Natural killer cell (primary cell): ENCODE measurements at regions of chr5 and their contacts with region 1.

Region 1: GRCh38 chr5:32585446-32586275 is at the start of gene SUB1:
- DNase-seq: peak; percentile 95 to 97
- ATAC-seq: peak; percentile 85 to 93 (median 87)
- H3K4me3 ChIP-seq: peak within 1 kb of the TSS; percentile 94
- H3K4me3 Mint-ChIP-seq: peak within 1 kb of the TSS; percentile 98
- H3K27ac ChIP-seq: peak within 1 kb of the TSS; percentile 99
- H3K27ac Mint-ChIP-seq: peak within 1 kb of the TSS; percentile 93 to 95
- H3K4me1 ChIP-seq: peaks cover 32% of the 10 kb centered on the region
- H3K4me1 Mint-ChIP-seq: peaks cover 60% of the 10 kb centered on the region in 2 donors
- H3K27me3 ChIP-seq: no peaks in the 10 kb centered on the region
- H3K27me3 Mint-ChIP-seq: no peaks in the 10 kb centered on the region
- CTCF ChIP-seq: no peak
- total RNA-seq, gene SUB1: 330 to 352 (median 338) TPM

Region 2: GRCh38 chr5:32174011-32174870 is 411.4 kb before region 1 on chr5 and contains the start of gene GOLPH3:
- intact Hi-C with region 1: loop called (anchors 2 kb)
- DNase-seq: peak; percentile 92
- ATAC-seq: peak; percentile 85 to 94 (median 87)
- H3K4me3 ChIP-seq: peak within 1 kb of the TSS; percentile 82
- H3K4me3 Mint-ChIP-seq: peak within 1 kb of the TSS; percentile 98
- H3K27ac ChIP-seq: peak within 1 kb of the TSS; percentile 93
- H3K27ac Mint-ChIP-seq: peak within 1 kb of the TSS; percentile 98
- H3K4me1 ChIP-seq: peaks cover 18% of the 10 kb centered on the region
- H3K4me1 Mint-ChIP-seq: peaks cover 32 to 34% of the 10 kb centered on the region in 2 donors
- H3K27me3 ChIP-seq: no peaks in the 10 kb centered on the region
- H3K27me3 Mint-ChIP-seq: peaks cover 0 to 9% of the 10 kb centered on the region in 2 donors
- CTCF ChIP-seq: no peak
- total RNA-seq, gene GOLPH3: 67.6 to 70.6 (median 69.3) TPM

Region 3: GRCh38 chr5:32241034-32241783 is 344.5 kb before region 1 on chr5:
- intact Hi-C with region 1: loop called (anchors 5 kb)
- DNase-seq: peak; percentile 41 to 69
- ATAC-seq: peak; percentile 89 to 93 (median 92)
- H3K4me3 ChIP-seq: no peak overlapping the region
- H3K4me3 Mint-ChIP-seq: peak overlapping the region; percentile 90
- H3K27ac ChIP-seq: peak overlapping the region; percentile 92
- H3K27ac Mint-ChIP-seq: peak overlapping the region; percentile 97 to 98
- H3K4me1 ChIP-seq: peaks cover 40% of the 10 kb centered on the region
- H3K4me1 Mint-ChIP-seq: peaks cover 54 to 55% of the 10 kb centered on the region in 2 donors
- H3K27me3 ChIP-seq: no peaks in the 10 kb centered on the region
- H3K27me3 Mint-ChIP-seq: no peaks in the 10 kb centered on the region
- CTCF ChIP-seq: no peak

Region 4: DNA sequence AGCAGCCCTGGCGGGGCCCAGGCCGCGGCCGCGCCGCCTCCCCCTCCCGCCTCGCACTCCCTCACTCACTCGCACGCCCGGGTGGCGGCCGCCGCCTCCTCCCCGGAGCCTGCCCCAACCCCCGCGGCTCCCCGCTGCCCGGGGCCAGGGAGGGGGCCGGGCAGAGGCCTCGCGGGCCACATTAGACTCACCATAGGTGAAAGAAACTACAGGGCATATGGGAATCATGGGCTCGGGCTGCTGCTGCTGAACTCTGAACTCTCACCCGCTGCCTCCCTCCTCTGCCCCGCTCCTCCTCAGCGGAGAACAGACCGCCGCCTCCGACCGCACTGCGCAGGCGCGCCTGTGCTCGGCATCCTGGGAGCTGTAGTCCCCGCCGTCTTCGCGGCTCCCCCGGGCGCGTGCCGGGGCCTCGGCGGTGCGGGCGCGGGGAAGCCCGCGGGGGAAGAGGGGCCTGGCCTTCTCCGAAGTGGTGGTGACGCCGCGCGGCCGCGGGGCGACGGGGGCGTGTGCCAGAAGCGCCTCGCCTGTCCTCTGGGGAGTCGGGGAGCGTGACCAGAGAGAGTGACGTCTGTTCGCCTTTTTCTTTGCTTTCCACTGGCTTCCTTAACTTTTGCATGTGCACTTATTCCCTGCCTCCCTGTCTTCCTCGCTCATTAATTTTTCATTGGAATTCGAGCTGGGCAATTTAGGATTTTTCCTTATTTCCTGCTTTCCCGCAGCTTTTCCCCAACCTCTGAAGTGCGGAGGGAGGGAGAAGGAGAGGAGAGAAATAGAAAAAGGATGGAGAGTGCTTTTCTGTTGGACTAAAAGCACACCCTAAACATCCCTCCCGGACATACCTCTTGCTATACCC is 141.0 kb before region 1 on chr5 and contains the start of gene ZFR:
- intact Hi-C with region 1: loop called (anchors 2 kb)
- DNase-seq: peak; percentile 86 to 97
- ATAC-seq: peak; percentile 87 to 95 (median 90)
- H3K4me3 ChIP-seq: peak within 1 kb of the TSS; percentile 98
- H3K4me3 Mint-ChIP-seq: peak within 1 kb of the TSS; percentile 91
- H3K27ac ChIP-seq: peak within 1 kb of the TSS; percentile 96
- H3K27ac Mint-ChIP-seq: peak within 1 kb of the TSS; percentile 90 to 91
- H3K4me1 ChIP-seq: peaks cover 17% of the 10 kb centered on the region
- H3K4me1 Mint-ChIP-seq: peaks cover 27 to 28% of the 10 kb centered on the region in 2 donors
- H3K27me3 ChIP-seq: no peaks in the 10 kb centered on the region
- H3K27me3 Mint-ChIP-seq: peaks cover 0 to 3% of the 10 kb centered on the region in 2 donors
- CTCF ChIP-seq: no peak
- total RNA-seq, gene ZFR: 62.7 to 70.8 (median 62.7) TPM

Region 5: DNA sequence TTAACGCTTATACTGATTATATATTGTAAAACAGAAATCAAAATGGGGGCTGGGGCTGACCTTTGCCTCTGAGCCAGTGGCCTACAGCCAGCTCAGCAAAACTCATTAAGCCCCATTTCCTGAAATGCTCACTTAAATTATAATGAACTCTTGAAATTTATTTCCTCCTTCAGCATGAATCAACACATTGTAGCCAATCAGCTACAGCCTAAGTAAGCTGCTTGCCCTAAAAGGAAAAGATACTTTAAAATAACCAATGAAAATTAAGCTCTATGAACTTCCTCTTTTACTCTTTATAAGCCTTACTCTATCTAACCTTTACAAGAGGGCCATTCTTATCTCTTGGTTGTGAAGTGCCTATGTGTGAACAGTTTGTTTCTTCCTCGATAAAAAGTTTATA is 33.8 kb before region 1 on chr5:
- intact Hi-C with region 1: no loop called
- DNase-seq: no peak
- ATAC-seq: no peak
- H3K4me3 ChIP-seq: no peak overlapping the region
- H3K4me3 Mint-ChIP-seq: no peak overlapping the region
- H3K27ac ChIP-seq: no peak overlapping the region
- H3K27ac Mint-ChIP-seq: no peak overlapping the region
- H3K4me1 ChIP-seq: no peaks in the 10 kb centered on the region
- H3K4me1 Mint-ChIP-seq: no peaks in the 10 kb centered on the region
- H3K27me3 ChIP-seq: no peaks in the 10 kb centered on the region
- H3K27me3 Mint-ChIP-seq: peaks cover 0 to 4% of the 10 kb centered on the region in 2 donors
- CTCF ChIP-seq: no peak

Region 6: DNA sequence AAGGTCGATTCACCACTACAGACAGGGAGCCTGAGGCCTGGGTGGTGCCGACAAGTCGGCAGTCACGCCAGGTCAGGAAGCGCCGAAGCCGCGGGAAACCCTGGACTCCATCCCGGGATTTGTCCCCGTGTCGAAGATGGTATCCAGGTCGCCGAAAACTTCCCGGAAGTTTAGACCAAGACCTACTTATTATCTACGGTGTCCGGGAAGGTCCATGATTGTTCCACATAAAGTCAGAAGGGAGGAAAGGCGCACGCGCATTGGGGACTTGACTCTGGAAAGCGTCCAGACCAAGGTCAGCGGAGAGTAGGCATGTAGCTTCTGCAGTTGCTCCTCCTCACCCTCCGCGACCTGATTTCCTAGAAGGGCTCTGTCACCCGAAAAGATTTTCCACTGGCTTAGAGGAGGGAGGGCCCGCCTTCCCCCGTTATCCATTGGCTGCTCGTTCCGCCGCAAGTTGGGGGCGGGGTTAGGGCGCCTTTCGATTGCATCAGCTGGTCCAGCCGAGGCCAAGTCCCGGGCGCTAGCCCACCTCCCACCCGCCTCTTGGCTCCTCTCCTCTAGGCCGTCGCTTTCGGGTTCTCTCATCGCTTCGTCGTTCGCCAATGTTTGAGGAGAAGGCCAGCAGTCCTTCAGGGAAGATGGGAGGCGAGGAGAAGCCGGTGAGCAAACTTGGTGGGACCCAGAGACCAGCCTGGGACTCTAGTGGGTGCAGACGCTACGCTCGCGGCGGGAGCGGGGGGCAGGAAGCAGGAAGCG is 855.0 kb after region 1 on chr5 and contains the start of gene TARS1:
- intact Hi-C with region 1: loop called (anchors 5 kb)
- DNase-seq: peak; percentile 94 to 96
- ATAC-seq: peak; percentile 92 to 98 (median 92)
- H3K4me3 ChIP-seq: peak within 1 kb of the TSS; percentile 91
- H3K4me3 Mint-ChIP-seq: no peak within 1 kb of the TSS
- H3K27ac ChIP-seq: peak within 1 kb of the TSS; percentile 90
- H3K27ac Mint-ChIP-seq: no peak within 1 kb of the TSS
- H3K4me1 ChIP-seq: peaks cover 21% of the 10 kb centered on the region
- H3K4me1 Mint-ChIP-seq: peaks cover 23 to 31% of the 10 kb centered on the region in 2 donors
- H3K27me3 ChIP-seq: no peaks in the 10 kb centered on the region
- H3K27me3 Mint-ChIP-seq: no peaks in the 10 kb centered on the region
- CTCF ChIP-seq: no peak
- total RNA-seq, gene TARS1: 59.9 to 74.8 (median 64.6) TPM